Activated CD4-positive, alpha-beta T cell treated with anti-CD3 and anti-CD28 coated beads, Interleukin-2, amount 10 ng/mL, durations not matched to agents 24 days and 14 days (primary cell): ENCODE measurements at regions of chr3 and their contacts with region 1.

Region 1: GRCh38 chr3:97871801-97872524 is 50.2 kb downstream of the CRYBG3 start:
- DNase-seq: peak; percentile 81
- H3K4me3 Mint-ChIP-seq: peak overlapping the region; percentile 62
- H3K27ac Mint-ChIP-seq: peak overlapping the region; percentile 90
- H3K4me1 Mint-ChIP-seq: peaks cover 21% of the 10 kb centered on the region
- H3K27me3 Mint-ChIP-seq: no peaks in the 10 kb centered on the region

Region 2: GRCh38 chr3:97764407-97765238 is 107.3 kb before region 1 on chr3 and contains the start of gene ARL6:
- intact Hi-C with region 1: loop called (anchors 2 kb)
- DNase-seq: peak; percentile 92
- H3K4me3 Mint-ChIP-seq: peak within 1 kb of the TSS; percentile 99
- H3K27ac Mint-ChIP-seq: peak within 1 kb of the TSS; percentile 97
- H3K4me1 Mint-ChIP-seq: peaks cover 21% of the 10 kb centered on the region
- H3K27me3 Mint-ChIP-seq: peaks cover 5% of the 10 kb centered on the region
- total RNA-seq, gene ARL6: 6.1 and 6.3 TPM in 2 replicates

Region 3: DNA sequence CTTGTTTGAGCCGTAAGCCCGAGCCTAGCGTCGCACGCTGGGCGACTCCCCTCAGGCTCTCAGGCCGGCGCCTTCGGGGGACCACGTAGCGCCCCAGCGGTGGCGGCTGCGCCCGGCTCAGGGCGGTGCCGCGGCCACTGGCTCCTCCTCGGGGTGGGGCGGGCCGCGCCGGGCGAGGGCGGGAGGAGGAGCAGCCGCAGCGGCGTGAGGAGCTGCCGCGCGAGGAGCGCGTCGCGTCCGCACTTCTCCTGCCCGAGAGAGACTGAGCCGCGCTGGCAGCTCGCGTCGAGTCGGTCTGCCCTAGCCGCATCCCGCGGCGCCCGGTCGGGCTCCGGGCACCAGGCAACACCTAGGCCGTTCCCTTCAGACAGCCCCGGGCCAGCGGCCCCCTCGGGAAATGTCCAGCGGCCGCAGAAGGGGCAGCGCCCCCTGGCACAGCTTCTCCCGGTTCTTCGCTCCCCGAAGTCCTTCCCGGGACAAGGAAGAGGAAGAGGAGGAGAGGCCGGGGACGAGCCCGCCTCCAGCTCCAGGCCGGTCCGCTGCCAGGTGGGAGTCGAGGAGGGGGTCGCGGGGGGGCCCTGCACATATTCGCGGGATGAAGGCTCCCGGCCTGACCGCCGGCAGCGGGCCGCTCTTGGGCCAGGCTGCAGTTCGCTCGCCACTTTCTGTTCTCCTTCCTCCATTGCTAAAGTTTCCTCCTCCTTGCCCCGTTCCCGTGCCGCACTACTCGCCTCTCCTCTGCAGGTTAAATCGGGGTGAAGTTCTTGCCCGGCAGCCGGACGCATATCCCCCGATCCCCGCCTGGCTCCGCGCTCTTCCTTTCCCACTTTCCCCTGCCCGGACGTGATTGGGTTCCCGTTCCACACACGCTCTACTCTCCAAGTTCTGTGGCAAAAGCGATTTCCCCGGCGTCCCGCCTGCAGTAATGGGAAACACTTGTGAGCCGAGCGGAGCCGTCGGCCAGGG is 49.9 kb before region 1 on chr3 and contains the start of gene CRYBG3:
- intact Hi-C with region 1: loop called (anchors 1 kb)
- DNase-seq: peak; percentile 97
- H3K4me3 Mint-ChIP-seq: peak within 1 kb of the TSS; percentile 99
- H3K27ac Mint-ChIP-seq: peak within 1 kb of the TSS; percentile 95
- H3K4me1 Mint-ChIP-seq: peaks cover 32% of the 10 kb centered on the region
- H3K27me3 Mint-ChIP-seq: peaks cover 33% of the 10 kb centered on the region
- total RNA-seq, gene CRYBG3: 8.1 and 8.3 TPM in 2 replicates

Region 4: GRCh38 chr3:97882975-97883598 is 11.1 kb after region 1 on chr3:
- intact Hi-C with region 1: loop called (anchors 1 kb)
- DNase-seq: no peak
- H3K4me3 Mint-ChIP-seq: no peak overlapping the region
- H3K27ac Mint-ChIP-seq: no peak overlapping the region
- H3K4me1 Mint-ChIP-seq: peaks cover 13% of the 10 kb centered on the region
- H3K27me3 Mint-ChIP-seq: no peaks in the 10 kb centered on the region

Region 5: DNA sequence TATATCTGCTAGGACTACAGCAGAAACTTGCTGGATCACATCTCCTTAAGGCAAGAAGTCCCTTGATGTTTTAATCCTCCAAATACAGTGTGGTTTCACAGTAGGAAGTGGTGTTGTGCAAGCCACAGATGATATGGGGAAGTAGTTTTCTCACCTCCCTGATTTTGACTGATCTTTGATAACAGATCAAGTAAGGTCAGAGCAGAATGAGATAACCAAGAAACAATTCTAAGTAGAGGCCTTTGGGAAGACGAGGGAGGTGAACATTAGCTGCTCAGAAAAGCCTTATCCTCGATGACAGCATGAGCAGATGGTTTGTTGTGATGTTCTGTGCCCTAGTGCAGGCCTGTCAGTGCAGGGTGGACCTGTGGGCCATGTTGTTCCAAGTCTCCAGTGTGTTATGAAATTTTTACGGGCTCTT is 39.0 kb after region 1 on chr3:
- intact Hi-C with region 1: loop called (anchors 5 kb)
- DNase-seq: peak; percentile 77
- H3K4me3 Mint-ChIP-seq: peak overlapping the region; percentile 81
- H3K27ac Mint-ChIP-seq: peak overlapping the region; percentile 61
- H3K4me1 Mint-ChIP-seq: peaks cover 16% of the 10 kb centered on the region
- H3K27me3 Mint-ChIP-seq: no peaks in the 10 kb centered on the region

Region 6: GRCh38 chr3:97935842-97936241 is 63.9 kb after region 1 on chr3:
- intact Hi-C with region 1: loop called (anchors 2 kb)
- DNase-seq: peak; percentile 53
- H3K4me3 Mint-ChIP-seq: no peak overlapping the region
- H3K27ac Mint-ChIP-seq: peak overlapping the region; percentile 60
- H3K4me1 Mint-ChIP-seq: peaks cover 12% of the 10 kb centered on the region
- H3K27me3 Mint-ChIP-seq: no peaks in the 10 kb centered on the region

Region 7: DNA sequence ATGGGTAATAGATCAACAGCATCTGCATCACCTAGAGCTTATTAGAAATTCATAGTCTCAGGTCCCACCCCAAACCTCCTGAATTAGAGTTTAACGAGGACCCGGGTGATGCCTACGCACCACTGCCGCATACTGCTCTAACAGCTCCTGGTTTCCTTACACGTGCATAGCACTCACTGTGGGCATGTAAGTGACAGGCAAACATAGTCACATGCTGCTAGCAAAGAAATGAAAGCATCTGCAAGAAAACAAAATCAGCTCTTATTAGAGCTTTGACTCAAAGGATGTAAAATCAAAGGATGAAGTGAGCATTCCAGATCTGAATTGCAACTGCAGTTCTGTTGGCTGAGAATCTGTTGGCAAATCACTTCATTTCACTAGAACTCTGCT is 119.3 kb after region 1 on chr3:
- intact Hi-C with region 1: no loop called
- DNase-seq: peak; percentile 78
- H3K4me3 Mint-ChIP-seq: peak overlapping the region; percentile 74
- H3K27ac Mint-ChIP-seq: peak overlapping the region; percentile 80
- H3K4me1 Mint-ChIP-seq: peaks cover 33% of the 10 kb centered on the region
- H3K27me3 Mint-ChIP-seq: no peaks in the 10 kb centered on the region

Region 8: GRCh38 chr3:98556164-98557130 is 684.5 kb after region 1 on chr3:
- intact Hi-C with region 1: loop called (anchors 1 kb)
- DNase-seq: peak; percentile 94
- H3K4me3 Mint-ChIP-seq: peak overlapping the region; percentile 80
- H3K27ac Mint-ChIP-seq: peak overlapping the region; percentile 93
- H3K4me1 Mint-ChIP-seq: peaks cover 74% of the 10 kb centered on the region
- H3K27me3 Mint-ChIP-seq: no peaks in the 10 kb centered on the region